ENCODE measurements at regions of chr11 and their contacts with region 1.

Region 1: GRCh38 chr11:86735462-86736302 is 63.3 kb upstream of the ME3 start:
- DNase-seq: no peak
- ATAC-seq: no peak
- H3K4me3 ChIP-seq: no peak overlapping the region
- H3K27ac ChIP-seq: no peak overlapping the region
- H3K4me1 ChIP-seq: peaks cover 3 to 5% of the 10 kb centered on the region in 2 donors
- H3K27me3 ChIP-seq: no peaks in the 10 kb centered on the region

Region 2: GRCh38 chr11:86676548-86677154 is 59.0 kb before region 1 on chr11:
- intact Hi-C with region 1: no loop called
- DNase-seq: no peak
- ATAC-seq: no peak
- H3K4me3 ChIP-seq: no peak overlapping the region
- H3K27ac ChIP-seq: no peak overlapping the region
- H3K4me1 ChIP-seq: peaks cover 0 to 2% of the 10 kb centered on the region in 2 donors
- H3K27me3 ChIP-seq: no peaks in the 10 kb centered on the region

Region 3: DNA sequence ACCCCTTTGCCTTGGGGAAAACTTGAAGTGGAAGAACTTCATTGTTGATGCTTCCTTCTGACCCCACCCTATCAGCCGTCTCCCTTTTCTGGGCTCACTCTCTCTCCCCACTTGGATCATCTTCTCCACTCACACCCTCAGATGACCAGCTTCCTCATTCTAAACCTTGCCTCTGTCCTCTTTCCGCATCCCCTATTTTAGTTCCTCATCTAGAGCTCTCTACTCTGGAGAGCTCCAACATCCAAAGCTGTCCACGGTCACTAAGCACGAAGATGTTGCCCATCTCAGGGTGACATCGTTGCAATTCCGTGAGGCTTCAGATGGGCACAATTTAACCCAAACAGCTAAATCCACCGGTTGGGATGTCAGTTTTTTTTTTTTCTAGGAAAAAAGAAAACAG is 31.7 kb before region 1 on chr11:
- intact Hi-C with region 1: loop called in 1 of 2 experiments (anchors 5 kb)
- DNase-seq: no peak
- ATAC-seq: no peak
- H3K4me3 ChIP-seq: no peak overlapping the region
- H3K27ac ChIP-seq: no peak overlapping the region
- H3K4me1 ChIP-seq: no peaks in the 10 kb centered on the region
- H3K27me3 ChIP-seq: no peaks in the 10 kb centered on the region